Mucosa of descending colon (tissue), 3 donors: ENCODE measurements at regions of chr9 and their contacts with region 1.

Region 1: DNA sequence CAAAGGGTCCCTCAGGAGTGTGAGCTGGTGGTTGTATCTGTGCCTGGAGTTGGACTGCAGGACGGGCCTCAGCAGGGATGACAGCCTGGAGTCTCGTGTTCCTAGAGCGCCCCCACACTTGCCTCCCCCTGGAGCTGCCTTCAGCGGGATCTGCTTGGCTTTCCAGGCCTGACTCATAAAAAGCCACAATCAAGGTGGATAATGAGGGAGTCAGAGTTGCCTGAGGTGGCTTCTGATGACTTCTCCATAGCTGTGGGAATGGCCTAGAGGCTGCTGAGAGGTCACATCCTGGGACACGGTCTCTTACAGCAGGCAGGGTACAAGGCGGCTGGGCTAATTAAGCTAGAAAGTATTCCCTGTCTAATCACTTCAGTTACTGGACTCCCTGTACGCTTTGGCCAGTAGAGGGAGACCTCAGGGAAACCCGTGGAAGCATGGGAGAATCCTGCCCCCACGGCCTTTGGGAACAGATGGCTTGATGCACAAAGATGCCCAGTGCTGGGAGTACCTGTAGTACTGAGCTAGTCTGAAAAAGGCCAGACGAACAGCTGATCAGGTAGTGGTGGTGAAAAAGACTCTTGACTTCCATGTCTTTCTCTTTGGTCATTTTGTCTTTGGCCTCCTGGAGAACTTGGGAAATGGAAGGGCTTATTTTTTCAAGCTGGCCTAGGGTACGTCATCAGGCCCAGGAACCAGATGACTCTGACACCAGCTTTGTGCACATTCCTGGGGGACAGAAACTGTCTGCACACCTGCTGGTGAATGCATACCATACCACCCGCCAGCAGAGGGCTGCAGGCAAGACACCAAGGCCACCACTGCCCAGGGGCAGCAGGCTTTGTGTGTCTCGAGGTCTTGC is 16.1 kb upstream of the FRRS1L start:
- DNase-seq: peak in 2 of 3 donors; percentile 55 to 63
- ATAC-seq: peak; percentile 86
- H3K4me3 ChIP-seq: no peak overlapping the region
- H3K4me1 ChIP-seq: no peaks in the 10 kb centered on the region
- CTCF ChIP-seq: peak; percentile 10

Region 2: GRCh38 chr9:109331359-109331758 is 148.2 kb after region 1 on chr9:
- intact Hi-C with region 1: loop called in 1 of 2 experiments (anchors 10 kb)
- DNase-seq: peak; percentile 87 to 88 (median 88)
- ATAC-seq: peak; percentile 89
- H3K4me3 ChIP-seq: no peak overlapping the region
- H3K4me1 ChIP-seq: peaks cover 10% of the 10 kb centered on the region
- CTCF ChIP-seq: no peak